ENCODE measurements at regions of chrX and their contacts with region 1.

Region 1: GRCh38 chrX:63434665-63435064 is 83.5 kb upstream of the SPIN4 start:
- DNase-seq: peak; percentile 78 to 86
- H3K4me3 ChIP-seq: no peak overlapping the region
- H3K4me3 Mint-ChIP-seq: peak overlapping the region; percentile 44
- H3K27ac Mint-ChIP-seq: peak overlapping the region; percentile 96
- H3K4me1 ChIP-seq: peaks cover 14% of the 10 kb centered on the region
- H3K4me1 Mint-ChIP-seq: peaks cover 11% of the 10 kb centered on the region
- H3K27me3 ChIP-seq: no peaks in the 10 kb centered on the region
- H3K27me3 Mint-ChIP-seq: no peaks in the 10 kb centered on the region
- CTCF ChIP-seq: no peak

Region 2: GRCh38 chrX:63282077-63282476 is 152.6 kb before region 1 on chrX:
- CTCF ChIA-PET with region 1: no interaction called
- POLR2A ChIA-PET with region 1: no interaction called
- intact Hi-C with region 1: no loop called
- DNase-seq: no peak
- H3K4me3 ChIP-seq: no peak overlapping the region
- H3K4me3 Mint-ChIP-seq: no peak overlapping the region
- H3K27ac Mint-ChIP-seq: no peak overlapping the region
- H3K4me1 ChIP-seq: no peaks in the 10 kb centered on the region
- H3K4me1 Mint-ChIP-seq: no peaks in the 10 kb centered on the region
- H3K27me3 ChIP-seq: no peaks in the 10 kb centered on the region
- H3K27me3 Mint-ChIP-seq: no peaks in the 10 kb centered on the region
- CTCF ChIP-seq: no peak

Region 3: GRCh38 chrX:63350941-63351616 is 83.6 kb before region 1 on chrX and contains the start of gene SPIN4:
- CTCF ChIA-PET with region 1: no interaction called
- POLR2A ChIA-PET with region 1: no interaction called
- intact Hi-C with region 1: loop called (anchors 5 kb)
- DNase-seq: peak; percentile 89
- H3K4me3 ChIP-seq: peak within 1 kb of the TSS; percentile 67
- H3K4me3 Mint-ChIP-seq: peak within 1 kb of the TSS; percentile 98
- H3K27ac Mint-ChIP-seq: peak within 1 kb of the TSS; percentile 89
- H3K4me1 ChIP-seq: no peaks in the 10 kb centered on the region
- H3K4me1 Mint-ChIP-seq: peaks cover 9% of the 10 kb centered on the region
- H3K27me3 ChIP-seq: no peaks in the 10 kb centered on the region
- H3K27me3 Mint-ChIP-seq: no peaks in the 10 kb centered on the region
- CTCF ChIP-seq: no peak
- total RNA-seq, gene SPIN4: 13.6 and 14.1 TPM in 2 replicates